ENCODE measurements at regions of chr20 and their contacts with region 1.

Region 1: DNA sequence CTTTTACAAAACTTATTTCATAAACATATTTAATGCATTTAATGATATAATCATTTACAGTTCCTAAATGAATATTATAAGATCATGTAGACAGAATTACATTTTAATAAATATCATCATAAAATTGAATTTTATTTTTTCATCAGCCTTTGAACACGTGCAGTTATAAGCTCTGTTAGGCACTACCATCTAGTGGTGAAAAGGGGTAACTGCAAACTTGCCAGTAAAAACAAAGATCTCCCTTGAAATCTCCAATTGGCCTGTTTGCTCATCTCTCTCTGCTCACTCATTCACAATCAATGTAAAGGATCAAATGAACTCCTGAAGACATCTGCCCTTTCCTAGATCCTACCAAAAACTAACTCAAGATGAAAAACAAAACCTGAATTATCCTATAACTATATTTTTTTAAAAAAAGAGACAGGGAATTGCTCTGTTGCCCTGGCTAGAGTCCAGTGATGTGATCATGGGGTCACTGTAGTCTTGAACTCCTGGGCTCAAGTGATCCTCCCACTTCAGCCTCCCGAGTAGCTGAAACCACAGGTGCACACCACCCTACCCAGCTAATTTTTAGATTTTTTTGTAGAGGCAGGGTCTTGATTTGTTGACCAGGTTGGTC is 31.7 kb downstream of the SAMHD1 start:
- DNase-seq: no peak
- H3K4me3 Mint-ChIP-seq: no peak overlapping the region
- H3K27ac Mint-ChIP-seq: peak overlapping the region; percentile 70
- H3K4me1 Mint-ChIP-seq: peaks cover 11% of the 10 kb centered on the region
- H3K27me3 Mint-ChIP-seq: no peaks in the 10 kb centered on the region

Region 2: DNA sequence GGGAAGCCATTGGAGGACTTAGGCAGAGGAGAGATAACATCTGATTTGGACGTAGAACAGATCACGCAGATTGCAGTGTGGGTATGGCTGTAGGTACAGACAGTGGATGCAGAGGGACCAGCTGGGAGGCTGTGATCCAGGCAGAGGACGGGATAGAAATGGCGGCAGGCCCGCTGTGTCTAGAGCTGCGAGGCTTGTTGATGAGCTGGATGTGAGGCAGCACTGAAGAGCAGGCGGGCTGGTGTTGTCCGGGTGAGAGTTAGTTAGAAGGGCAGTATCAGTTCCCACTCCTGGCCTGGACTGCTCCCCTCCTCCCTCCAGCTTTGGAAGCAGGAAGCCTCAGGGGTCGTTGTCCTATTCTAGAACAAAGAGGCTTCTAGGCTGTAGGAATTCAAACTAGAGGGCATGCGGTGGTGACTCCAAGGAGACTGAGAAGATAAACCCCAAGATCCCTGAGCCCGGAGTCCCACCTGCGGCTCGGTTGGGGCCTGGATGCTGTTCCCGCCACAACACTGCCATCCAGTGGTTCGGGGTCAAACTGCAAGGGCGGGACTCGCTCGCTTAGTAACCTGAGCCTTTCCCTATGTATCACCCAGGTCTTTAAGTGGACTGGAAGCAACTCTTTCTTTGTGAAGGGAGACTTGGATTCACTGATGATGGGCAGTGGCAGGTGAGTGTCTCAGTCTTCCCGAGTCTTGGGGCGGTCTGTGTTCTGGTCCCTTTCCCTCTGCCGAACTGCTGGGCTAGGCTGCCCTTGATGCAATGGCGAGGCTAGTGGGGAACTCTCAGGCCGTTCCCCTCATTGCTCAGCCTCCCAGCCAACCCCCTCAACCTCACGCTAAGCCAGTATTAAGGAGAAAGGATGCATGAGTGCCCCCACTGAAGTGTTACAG is 32.7 kb before region 1 on chr20:
- CTCF ChIA-PET with region 1: interaction called, 14 read pairs
- POLR2A ChIA-PET with region 1: interaction called, 4 read pairs
- intact Hi-C with region 1: no loop called
- DNase-seq: peak; percentile 90
- H3K4me3 Mint-ChIP-seq: no peak overlapping the region
- H3K27ac Mint-ChIP-seq: no peak overlapping the region
- H3K4me1 Mint-ChIP-seq: peaks cover 25% of the 10 kb centered on the region
- H3K27me3 Mint-ChIP-seq: no peaks in the 10 kb centered on the region

Region 3: DNA sequence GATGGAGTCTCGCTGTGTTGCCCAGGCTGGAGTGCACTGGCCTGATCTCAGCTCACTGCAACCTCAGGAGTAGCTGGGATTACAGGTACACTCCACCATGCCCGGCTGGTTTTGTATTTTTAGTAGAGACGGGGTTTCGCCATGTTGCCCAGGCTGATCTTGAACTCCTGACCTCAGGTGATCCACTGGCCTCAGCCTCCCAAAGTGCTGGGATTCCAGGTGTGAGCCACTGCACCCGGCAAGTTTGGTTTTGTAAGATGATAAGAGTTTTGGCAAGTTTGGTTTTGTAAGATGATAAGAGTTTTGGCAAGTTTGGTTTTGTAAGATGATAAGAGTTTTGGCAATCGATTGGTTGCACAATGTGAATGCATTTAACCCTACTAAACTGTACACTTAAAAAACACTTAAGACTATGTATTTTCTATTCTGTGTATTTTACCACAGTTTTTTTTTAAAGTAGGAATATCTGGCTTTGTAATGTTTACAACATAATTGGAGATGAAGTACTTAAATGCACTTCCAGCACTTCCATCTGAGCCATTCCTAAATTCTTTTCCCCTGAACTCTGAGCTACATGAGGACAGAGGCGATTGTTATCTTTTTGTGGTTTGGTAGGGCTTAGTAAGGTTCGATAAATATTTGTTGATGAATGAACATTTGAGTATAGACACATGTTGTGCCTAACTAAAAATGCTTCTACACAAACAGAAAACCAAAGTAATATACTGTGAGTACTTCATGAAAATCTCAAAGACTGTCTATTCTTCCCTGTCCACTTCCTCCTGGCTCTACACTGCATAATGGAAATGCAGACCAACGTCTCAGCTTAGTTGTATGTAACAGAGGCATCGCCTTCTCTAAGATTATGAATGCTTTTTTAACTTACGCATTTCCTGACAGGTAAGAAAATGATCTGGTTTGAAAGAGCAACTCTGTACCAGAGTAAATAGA is 12.9 kb after region 1 on chr20:
- CTCF ChIA-PET with region 1: interaction called, 10 read pairs
- POLR2A ChIA-PET with region 1: no interaction called
- intact Hi-C with region 1: no loop called
- DNase-seq: no peak
- H3K4me3 Mint-ChIP-seq: no peak overlapping the region
- H3K27ac Mint-ChIP-seq: peak overlapping the region; percentile 72
- H3K4me1 Mint-ChIP-seq: peaks cover 56% of the 10 kb centered on the region
- H3K27me3 Mint-ChIP-seq: no peaks in the 10 kb centered on the region

Measured in activated CD4-positive, alpha-beta memory T cell treated with anti-CD3 and anti-CD28 coated beads for 36 hours (primary cell).